ENCODE measurements at regions of chr2 and their contacts with region 1.

Region 1: GRCh38 chr2:26144953-26145680 is 27.8 kb upstream of the GAREM2 start:
- DNase-seq: peak; percentile 63 to 79 (median 70)
- ATAC-seq: peak; percentile 73
- H3K4me3 ChIP-seq: no peak overlapping the region
- H3K27ac ChIP-seq: peak overlapping the region in 3 of 4 donors; percentile 59 to 70 (median 69)
- H3K4me1 ChIP-seq: peaks cover 19% of the 10 kb centered on the region
- H3K27me3 ChIP-seq: no peaks in the 10 kb centered on the region
- CTCF ChIP-seq: peak; percentile 52 to 93 (median 83)
- POLR2A ChIP-seq: no peak

Region 2: DNA sequence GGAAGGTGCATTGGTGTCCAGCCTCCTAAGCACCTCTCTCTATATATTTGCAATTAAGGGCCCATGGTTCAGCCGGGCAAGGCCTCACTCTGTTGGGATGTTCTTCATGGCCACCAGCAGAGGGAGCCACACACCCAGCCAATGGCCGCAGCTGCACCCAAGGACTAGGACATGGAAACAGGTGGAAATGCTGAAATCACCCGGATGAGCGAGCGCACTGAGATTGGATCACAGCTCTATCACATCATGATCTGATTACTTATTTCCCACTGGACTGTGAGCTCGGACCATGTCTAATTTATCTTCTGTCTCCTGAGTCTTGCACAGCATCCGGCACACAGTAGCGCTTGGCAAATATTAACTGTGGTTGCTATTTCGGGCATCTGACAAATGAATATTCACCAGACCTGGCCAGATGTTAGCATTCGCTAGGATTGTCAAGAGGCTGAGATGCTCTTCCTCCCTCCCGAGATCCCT is 194.0 kb before region 1 on chr2:
- intact Hi-C with region 1: loop called (anchors 5 kb)
- DNase-seq: peak; percentile 86 to 89 (median 88)
- ATAC-seq: peak; percentile 98
- H3K4me3 ChIP-seq: no peak overlapping the region
- H3K27ac ChIP-seq: peak overlapping the region in 1 of 4 donors; percentile 41
- H3K4me1 ChIP-seq: no peaks in the 10 kb centered on the region
- H3K27me3 ChIP-seq: no peaks in the 10 kb centered on the region
- CTCF ChIP-seq: peak; percentile 69 to 96 (median 94)
- POLR2A ChIP-seq: peak in 1 of 3 donors; percentile 9

Region 3: DNA sequence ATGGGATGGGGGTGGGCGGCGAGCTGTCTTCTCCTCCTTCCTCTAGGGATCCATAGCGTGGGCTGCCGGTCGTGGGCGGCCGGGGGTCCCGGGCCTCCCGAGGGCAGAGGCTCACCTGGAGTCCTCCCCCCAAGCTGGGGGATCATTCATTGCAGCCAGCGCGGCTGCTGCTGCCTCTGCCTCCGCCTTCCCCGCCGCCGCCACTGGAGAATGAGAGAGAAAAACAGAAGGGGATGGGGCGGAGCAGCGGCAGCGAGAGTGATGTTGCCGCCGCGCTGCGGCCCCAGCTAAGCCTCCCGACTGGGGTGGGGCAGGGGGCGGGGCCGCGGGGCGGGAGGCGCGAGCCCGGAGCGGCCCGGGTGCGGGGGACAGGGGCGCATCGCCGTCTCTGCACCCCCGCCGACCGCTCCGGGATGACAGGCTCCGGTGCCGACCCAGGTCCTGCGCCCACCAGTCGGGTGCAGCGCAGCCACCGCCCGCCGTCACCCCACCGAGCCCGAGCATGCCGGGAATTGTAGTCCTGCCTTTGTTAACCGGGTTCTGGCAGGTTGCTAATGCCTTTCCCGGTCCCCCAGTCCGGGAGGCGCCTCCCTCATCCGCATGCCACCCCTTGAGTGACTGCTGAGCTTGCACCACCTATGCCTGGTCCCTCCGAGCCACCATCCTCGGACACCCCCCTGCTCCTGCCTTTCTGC is 162.7 kb before region 1 on chr2 and contains the start of gene KIF3C:
- intact Hi-C with region 1: loop called (anchors 10 kb)
- DNase-seq: peak; percentile 51 to 70 (median 63)
- ATAC-seq: peak; percentile 69
- H3K4me3 ChIP-seq: peak within 1 kb of the TSS; percentile 38 to 79
- H3K27ac ChIP-seq: peak within 1 kb of the TSS in 3 of 4 donors; percentile 36 to 52 (median 40)
- H3K4me1 ChIP-seq: peaks cover 13% of the 10 kb centered on the region
- H3K27me3 ChIP-seq: no peaks in the 10 kb centered on the region
- CTCF ChIP-seq: no peak
- POLR2A ChIP-seq: no peak
- total RNA-seq, gene KIF3C: 0.99 to 3.1 TPM

Region 4: DNA sequence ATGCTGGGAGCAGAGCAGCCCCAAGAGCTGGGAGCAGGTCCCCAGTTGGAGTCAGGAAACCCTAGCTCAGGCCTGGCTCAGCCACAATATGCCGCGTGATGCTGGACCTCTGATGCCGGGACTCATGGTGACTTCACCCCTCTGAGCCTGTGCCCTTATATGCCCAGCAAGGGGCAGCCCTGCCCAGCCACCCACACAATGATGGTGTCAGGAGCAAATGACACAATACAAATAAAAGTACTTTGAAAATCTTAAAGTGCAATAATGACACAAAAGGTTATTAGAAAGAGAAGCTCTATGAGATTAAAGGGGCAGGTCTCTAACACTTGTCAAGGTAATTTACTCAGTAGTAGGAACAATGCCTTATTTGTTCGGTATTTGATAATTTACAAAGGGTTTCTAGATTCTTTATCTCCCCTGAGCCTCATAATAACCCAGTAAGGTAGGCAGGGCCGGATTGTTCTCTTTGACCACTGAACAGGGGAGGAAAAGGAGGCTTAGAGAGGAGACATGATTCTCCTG is 144.5 kb before region 1 on chr2:
- intact Hi-C with region 1: no loop called
- DNase-seq: peak in 3 of 4 donors; percentile 38 to 67 (median 61)
- ATAC-seq: peak; percentile 69
- H3K4me3 ChIP-seq: no peak overlapping the region
- H3K27ac ChIP-seq: peak overlapping the region in 3 of 4 donors; percentile 68 to 78 (median 74)
- H3K4me1 ChIP-seq: peaks cover 46% of the 10 kb centered on the region
- H3K27me3 ChIP-seq: no peaks in the 10 kb centered on the region
- CTCF ChIP-seq: no peak
- POLR2A ChIP-seq: no peak

Region 5: GRCh38 chr2:26330113-26330549 is 185.0 kb after region 1 on chr2:
- intact Hi-C with region 1: no loop called
- DNase-seq: peak; percentile 87 to 94 (median 90)
- ATAC-seq: peak; percentile 96
- H3K4me3 ChIP-seq: no peak overlapping the region
- H3K27ac ChIP-seq: no peak overlapping the region
- H3K4me1 ChIP-seq: peaks cover 7% of the 10 kb centered on the region
- H3K27me3 ChIP-seq: no peaks in the 10 kb centered on the region
- CTCF ChIP-seq: peak; percentile 68 to 90 (median 85)
- POLR2A ChIP-seq: no peak